ENCODE measurements at regions of chr1 and their contacts with region 1.

Region 1: GRCh38 chr1:116372587-116373444 is at the start of gene ATP1A1:
- DNase-seq: peak; percentile 98 to 100 (median 99)
- H3K4me3 ChIP-seq: peak within 1 kb of the TSS; percentile 98
- H3K27ac ChIP-seq: peak within 1 kb of the TSS; percentile 86 to 88
- H3K4me1 ChIP-seq: peaks cover 6% of the 10 kb centered on the region
- H3K27me3 ChIP-seq: no peaks in the 10 kb centered on the region
- CTCF ChIP-seq: peak in 2 of 3 donors; percentile 39 to 52
- EP300 ChIP-seq: no peak
- POLR2A ChIP-seq: peak; percentile 92
- total RNA-seq, gene ATP1A1: 106 to 279 (median 196) TPM

Region 2: GRCh38 chr1:116036255-116036654 is 336.6 kb before region 1 on chr1:
- intact Hi-C with region 1: no loop called
- DNase-seq: no peak
- H3K4me3 ChIP-seq: no peak overlapping the region
- H3K27ac ChIP-seq: no peak overlapping the region
- H3K4me1 ChIP-seq: no peaks in the 10 kb centered on the region
- H3K27me3 ChIP-seq: no peaks in the 10 kb centered on the region
- CTCF ChIP-seq: no peak
- EP300 ChIP-seq: no peak
- POLR2A ChIP-seq: no peak

Region 3: GRCh38 chr1:116474921-116475849 is 102.4 kb after region 1 on chr1:
- intact Hi-C with region 1: loop called in 2 of 4 experiments (anchors 5 to 10 kb)
- DNase-seq: no peak
- H3K4me3 ChIP-seq: no peak overlapping the region
- H3K27ac ChIP-seq: no peak overlapping the region
- H3K4me1 ChIP-seq: peaks cover 1% of the 10 kb centered on the region
- H3K27me3 ChIP-seq: no peaks in the 10 kb centered on the region
- CTCF ChIP-seq: no peak
- EP300 ChIP-seq: no peak
- POLR2A ChIP-seq: no peak

Region 4: GRCh38 chr1:116570358-116571200 is 197.8 kb after region 1 on chr1 and contains the start of gene CD58:
- intact Hi-C with region 1: loop called in 1 of 4 experiments (anchors 5 kb)
- DNase-seq: peak; percentile 76 to 86 (median 80)
- H3K4me3 ChIP-seq: peak within 1 kb of the TSS; percentile 97
- H3K27ac ChIP-seq: peak within 1 kb of the TSS; percentile 79 to 85
- H3K4me1 ChIP-seq: no peaks in the 10 kb centered on the region
- H3K27me3 ChIP-seq: no peaks in the 10 kb centered on the region
- CTCF ChIP-seq: peak in 2 of 3 donors; percentile 38 to 45
- EP300 ChIP-seq: no peak
- POLR2A ChIP-seq: peak; percentile 28
- total RNA-seq, gene CD58: 5.2 to 10.9 (median 6.3) TPM

Region 5: GRCh38 chr1:116909510-116910378 is 536.9 kb after region 1 on chr1 and contains the start of gene PTGFRN:
- intact Hi-C with region 1: loop called in 1 of 4 experiments (anchors 10 kb)
- DNase-seq: peak; percentile 73 to 89 (median 82)
- H3K4me3 ChIP-seq: peak within 1 kb of the TSS; percentile 54
- H3K27ac ChIP-seq: peak within 1 kb of the TSS; percentile 77 to 86
- H3K4me1 ChIP-seq: peaks cover 2% of the 10 kb centered on the region
- H3K27me3 ChIP-seq: no peaks in the 10 kb centered on the region
- CTCF ChIP-seq: no peak
- EP300 ChIP-seq: no peak
- POLR2A ChIP-seq: peak; percentile 10
- total RNA-seq, gene PTGFRN: 26.0 to 87.6 (median 65.8) TPM

Region 6: GRCh38 chr1:117367047-117368018 is 994.5 kb after region 1 on chr1 and contains the start of gene MAN1A2:
- intact Hi-C with region 1: loop called in 1 of 4 experiments (anchors 10 kb)
- DNase-seq: peak; percentile 86 to 89 (median 88)
- H3K4me3 ChIP-seq: peak within 1 kb of the TSS; percentile 65
- H3K27ac ChIP-seq: peak within 1 kb of the TSS; percentile 96 to 99
- H3K4me1 ChIP-seq: peaks cover 6% of the 10 kb centered on the region
- H3K27me3 ChIP-seq: no peaks in the 10 kb centered on the region
- CTCF ChIP-seq: peak in 1 of 3 donors; percentile 30
- EP300 ChIP-seq: no peak
- POLR2A ChIP-seq: peak; percentile 80
- total RNA-seq, gene MAN1A2: 25.9 to 59.9 (median 48.1) TPM

Measured in ovary (tissue), 10 donors.